MCF 10A (cell line): ENCODE measurements at regions of chr1 and their contacts with region 1.

Region 1: GRCh38 chr1:192580351-192580962 is 4.9 kb downstream of the RGS1 start:
- DNase-seq: peak; percentile 72
- H3K4me3 Mint-ChIP-seq: no peak overlapping the region
- H3K27ac Mint-ChIP-seq: no peak overlapping the region
- H3K4me1 Mint-ChIP-seq: peaks cover 6% of the 10 kb centered on the region
- H3K27me3 Mint-ChIP-seq: no peaks in the 10 kb centered on the region
- CTCF ChIP-seq: peak; percentile 74

Region 2: GRCh38 chr1:192506741-192507155 is 73.7 kb before region 1 on chr1:
- CTCF ChIA-PET with region 1: no interaction called
- POLR2A ChIA-PET with region 1: no interaction called
- intact Hi-C with region 1: loop called (anchors 2 kb)
- DNase-seq: peak; percentile 30
- H3K4me3 Mint-ChIP-seq: no peak overlapping the region
- H3K27ac Mint-ChIP-seq: no peak overlapping the region
- H3K4me1 Mint-ChIP-seq: no peaks in the 10 kb centered on the region
- H3K27me3 Mint-ChIP-seq: no peaks in the 10 kb centered on the region
- CTCF ChIP-seq: no peak

Region 3: DNA sequence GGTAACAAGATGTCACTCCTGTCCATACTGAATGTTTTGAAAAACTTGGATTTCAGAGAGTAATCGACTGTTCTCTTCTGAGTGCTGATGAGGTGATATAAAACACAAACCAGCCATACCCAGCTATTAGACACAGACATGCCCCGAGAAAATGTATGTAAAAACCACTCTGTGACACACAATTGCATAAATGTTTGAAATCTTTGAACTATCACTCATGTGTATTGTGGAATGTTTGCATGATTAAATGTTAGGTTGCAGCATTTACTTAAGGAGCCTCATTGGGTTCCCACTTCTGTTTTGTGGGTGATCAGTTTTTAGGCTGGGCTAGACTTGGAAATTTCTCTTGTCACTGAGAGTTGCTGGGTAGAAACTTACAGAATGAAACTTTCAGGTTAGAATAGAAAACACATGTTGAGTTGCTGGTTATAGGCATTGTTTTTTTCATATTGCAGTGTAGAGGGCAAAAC is 876.4 kb after region 1 on chr1:
- CTCF ChIA-PET with region 1: no interaction called
- POLR2A ChIA-PET with region 1: no interaction called
- intact Hi-C with region 1: no loop called
- DNase-seq: no peak
- H3K4me3 Mint-ChIP-seq: no peak overlapping the region
- H3K27ac Mint-ChIP-seq: no peak overlapping the region
- H3K4me1 Mint-ChIP-seq: no peaks in the 10 kb centered on the region
- H3K27me3 Mint-ChIP-seq: no peaks in the 10 kb centered on the region
- CTCF ChIP-seq: no peak